A549 (cell line): ENCODE measurements at regions of chr11 and their contacts with region 1.

Region 1: DNA sequence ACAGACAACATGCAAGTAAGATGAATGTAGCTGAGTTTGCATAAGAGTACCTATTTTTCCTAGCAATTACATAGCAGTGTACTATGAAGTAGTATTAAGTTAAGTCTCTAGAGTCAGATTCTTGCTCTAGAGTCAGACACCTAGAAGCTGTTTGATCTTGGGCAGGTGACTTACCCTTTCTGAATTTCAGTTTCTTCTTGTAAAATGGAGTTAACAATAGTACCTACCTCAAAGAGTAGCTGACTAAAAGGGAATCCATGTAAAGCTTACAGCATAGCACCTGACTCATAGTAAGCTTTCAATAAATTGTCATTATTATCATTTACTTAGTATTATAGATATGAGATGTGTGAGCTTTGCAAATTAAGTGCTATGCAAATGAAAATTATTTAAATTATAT is 47.8 kb upstream of the PTPRJ start:
- DNase-seq: no peak
- ATAC-seq: no peak
- H3K4me3 ChIP-seq: no peak overlapping the region
- H3K27ac ChIP-seq: peak overlapping the region; percentile 78 to 92
- H3K4me1 ChIP-seq: peaks cover 32% of the 10 kb centered on the region
- CTCF ChIP-seq: no peak
- EP300 ChIP-seq: no peak
- POLR2A ChIP-seq: no peak
- RAD21 ChIP-seq: no peak

Region 2: GRCh38 chr11:47917643-47918369 is 14.7 kb before region 1 on chr11:
- CTCF ChIA-PET with region 1: interaction called, 10 read pairs
- POLR2A ChIA-PET with region 1: interaction called, 3 read pairs
- DNase-seq: peak; percentile 80 to 94
- ATAC-seq: peak; percentile 80 to 93
- H3K4me3 ChIP-seq: no peak overlapping the region
- H3K27ac ChIP-seq: peak overlapping the region; percentile 73 to 76
- H3K4me1 ChIP-seq: peaks cover 53% of the 10 kb centered on the region
- CTCF ChIP-seq: no peak
- EP300 ChIP-seq: no peak
- POLR2A ChIP-seq: no peak
- RAD21 ChIP-seq: no peak

Region 3: GRCh38 chr11:47967577-47968425 is 35.3 kb after region 1 on chr11:
- CTCF ChIA-PET with region 1: interaction called, 18 read pairs
- POLR2A ChIA-PET with region 1: no interaction called
- DNase-seq: no peak
- ATAC-seq: peak in 1 of 2 experiments; percentile 33; a peak in 1 of 6 replicates
- H3K4me3 ChIP-seq: no peak overlapping the region
- H3K27ac ChIP-seq: peak overlapping the region in 1 of 2 experiments; percentile 19; a peak in 3 of 6 replicates
- H3K4me1 ChIP-seq: peaks cover 10% of the 10 kb centered on the region; the same call in 1 of the 3 replicates
- CTCF ChIP-seq: no peak
- EP300 ChIP-seq: no peak
- POLR2A ChIP-seq: no peak
- RAD21 ChIP-seq: no peak

Region 4: DNA sequence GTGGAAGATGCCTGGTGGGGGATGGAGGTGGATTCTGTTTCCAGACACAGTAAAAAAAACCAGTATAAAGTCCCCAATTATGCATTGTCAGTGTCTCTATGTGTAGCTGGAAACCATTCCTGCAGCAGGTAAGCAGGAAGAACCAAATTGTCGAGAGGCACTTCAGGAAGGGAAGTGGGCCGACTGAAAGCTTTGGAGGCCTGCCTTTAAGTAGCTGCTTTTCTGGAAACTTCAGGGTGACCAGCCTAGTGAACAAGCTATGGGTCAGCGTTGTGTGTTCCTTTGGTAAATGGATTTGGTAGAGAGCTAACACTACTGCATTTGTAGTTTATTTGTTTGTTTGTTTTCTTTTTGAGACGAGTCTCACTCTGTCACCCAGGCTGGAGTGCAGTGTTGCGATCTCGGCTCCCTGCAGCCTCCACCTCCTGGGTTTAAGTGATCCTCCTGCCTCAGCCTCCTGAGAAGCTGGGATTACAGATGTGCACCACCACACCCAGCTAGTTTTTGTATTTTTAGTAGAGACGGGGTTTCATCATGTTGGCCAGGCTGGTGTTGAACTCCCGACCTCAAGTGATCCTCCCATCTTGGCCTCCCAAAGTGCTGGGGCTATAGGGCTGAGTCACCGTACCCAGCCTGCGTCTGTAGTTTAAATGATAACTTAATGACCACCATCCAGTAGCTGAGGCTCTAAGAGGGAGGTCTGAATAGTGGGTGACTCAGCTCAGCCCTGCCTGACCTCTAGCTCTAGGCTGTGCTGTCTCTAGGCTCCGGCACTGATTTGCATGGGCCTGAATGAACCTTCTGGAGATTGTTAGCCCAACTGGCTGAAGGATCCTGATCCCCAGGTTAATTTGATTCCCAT is 60.6 kb after region 1 on chr11:
- CTCF ChIA-PET with region 1: interaction called, 19 read pairs
- POLR2A ChIA-PET with region 1: interaction called, 5 read pairs
- DNase-seq: peak; percentile 72 to 95
- ATAC-seq: peak; percentile 90 to 92
- H3K4me3 ChIP-seq: no peak overlapping the region
- H3K27ac ChIP-seq: peak overlapping the region; percentile 97 to 100
- H3K4me1 ChIP-seq: peaks cover 92% of the 10 kb centered on the region
- CTCF ChIP-seq: no peak
- EP300 ChIP-seq: peak; percentile 80 to 82; a peak in 3 of 5 replicates
- POLR2A ChIP-seq: no peak
- RAD21 ChIP-seq: peak; percentile 28 to 42; a peak in 4 of 5 replicates

Region 5: DNA sequence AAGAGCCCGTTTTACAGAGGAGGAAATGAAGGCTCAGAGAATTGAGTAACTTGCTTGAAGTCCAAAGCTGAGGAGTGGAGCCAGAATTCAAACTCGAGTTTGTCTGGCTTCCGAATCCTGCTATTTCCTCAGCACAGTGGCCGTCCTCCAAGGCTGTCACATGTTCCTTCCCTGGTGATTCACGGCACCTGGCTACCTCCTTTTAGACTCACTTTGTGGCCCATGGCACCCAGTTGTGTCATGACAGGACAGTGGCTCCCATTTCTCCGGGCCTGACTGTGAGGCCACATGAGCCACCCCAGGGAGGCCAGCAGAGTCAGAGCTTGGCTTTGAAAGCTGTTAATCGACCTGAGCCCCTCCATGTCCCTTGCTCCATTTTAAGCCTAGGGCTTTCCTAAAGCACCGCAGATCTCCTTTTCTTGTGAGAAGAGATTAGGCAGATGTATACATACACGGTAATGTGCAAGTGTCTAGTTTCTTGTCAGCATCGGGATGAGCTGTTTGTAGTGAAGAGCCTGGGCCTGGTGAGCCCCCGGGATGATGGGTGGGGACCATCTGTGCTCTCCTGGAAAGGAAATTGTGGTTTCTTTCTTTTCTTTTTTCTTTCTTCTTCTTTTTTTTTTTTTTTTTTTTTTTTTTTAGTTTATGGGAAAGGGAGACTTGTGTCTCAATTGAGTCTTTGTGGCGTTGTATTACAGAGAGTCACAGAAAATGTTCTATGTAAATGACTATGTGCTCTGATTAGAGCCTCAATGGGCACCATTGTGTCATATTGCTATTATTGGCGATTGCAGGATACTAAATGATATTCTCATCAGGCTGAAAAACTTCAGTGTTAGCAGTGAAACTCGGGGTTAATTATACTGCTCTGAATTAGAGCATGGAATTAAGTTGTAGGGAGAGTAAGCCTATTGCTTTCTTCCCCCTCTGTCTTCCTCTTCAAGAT is 102.7 kb after region 1 on chr11:
- CTCF ChIA-PET with region 1: no interaction called
- POLR2A ChIA-PET with region 1: no interaction called
- DNase-seq: no peak
- ATAC-seq: no peak
- H3K4me3 ChIP-seq: no peak overlapping the region
- H3K27ac ChIP-seq: peak overlapping the region in 1 of 2 experiments; percentile 31; a peak in 2 of 6 replicates
- H3K4me1 ChIP-seq: peaks cover 58% of the 10 kb centered on the region
- CTCF ChIP-seq: no peak
- EP300 ChIP-seq: no peak
- POLR2A ChIP-seq: no peak
- RAD21 ChIP-seq: no peak

Region 6: DNA sequence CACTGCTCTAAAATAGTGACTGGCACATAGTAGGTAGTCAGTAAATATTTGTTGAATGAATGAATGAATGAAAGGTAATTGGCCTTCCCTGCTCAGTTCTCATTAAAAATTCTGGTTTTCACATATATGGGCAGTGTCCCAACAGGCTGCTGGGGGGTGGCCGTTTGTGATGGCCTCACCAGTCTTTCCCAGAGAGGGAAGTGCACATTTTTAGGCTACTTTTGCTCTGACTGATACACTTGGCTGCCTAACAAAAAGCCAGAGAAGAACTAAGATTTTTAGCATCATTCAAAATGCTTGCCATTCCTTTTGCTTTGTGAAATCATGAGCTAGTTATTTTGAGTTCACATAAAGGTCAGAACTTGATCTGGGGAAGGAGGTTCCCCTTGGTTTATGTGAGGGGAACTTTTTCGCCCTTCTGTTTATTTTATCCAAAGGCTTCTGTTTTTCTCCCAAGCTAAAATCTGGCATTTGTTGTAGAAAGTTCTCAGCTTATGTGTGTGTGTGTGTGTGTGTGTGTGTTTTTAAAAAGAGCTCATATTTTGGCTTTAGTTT is 131.0 kb after region 1 on chr11:
- CTCF ChIA-PET with region 1: interaction called, 11 read pairs
- POLR2A ChIA-PET with region 1: interaction called, 11 read pairs
- DNase-seq: peak; percentile 57 to 78
- ATAC-seq: peak; percentile 61 to 72
- H3K4me3 ChIP-seq: no peak overlapping the region
- H3K27ac ChIP-seq: peak overlapping the region; percentile 74 to 90
- H3K4me1 ChIP-seq: peaks cover 84% of the 10 kb centered on the region
- CTCF ChIP-seq: no peak
- EP300 ChIP-seq: peak in 1 of 2 experiments; percentile 57; a peak in 2 of 5 replicates
- POLR2A ChIP-seq: no peak
- RAD21 ChIP-seq: peak in 1 of 2 experiments; percentile 15; a peak in 1 of 5 replicates

Region 7: DNA sequence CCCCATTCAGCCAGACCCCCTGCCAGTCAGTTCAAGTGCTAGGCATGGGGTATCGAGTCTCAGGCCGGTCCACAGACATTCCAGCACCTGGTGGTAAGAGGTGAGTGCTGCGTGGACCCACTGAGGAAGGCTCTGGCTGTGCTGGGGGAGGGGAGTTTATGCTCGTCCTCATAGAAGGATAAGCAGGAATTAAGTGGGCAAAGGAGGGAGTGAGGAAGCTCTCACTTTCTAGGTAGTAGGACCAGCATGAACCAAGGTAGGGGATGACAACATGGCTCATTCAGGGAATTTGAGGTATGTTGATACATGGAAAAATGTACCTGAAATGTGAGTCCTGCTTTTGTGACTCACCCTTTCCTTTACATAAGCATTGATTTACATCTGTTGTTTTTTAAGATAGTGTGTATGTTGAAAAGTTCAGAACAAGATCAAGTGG is 164.5 kb after region 1 on chr11:
- CTCF ChIA-PET with region 1: interaction called, 478 read pairs
- POLR2A ChIA-PET with region 1: no interaction called
- DNase-seq: no peak
- ATAC-seq: peak in 1 of 2 experiments; percentile 11; a peak in 2 of 6 replicates
- H3K4me3 ChIP-seq: no peak overlapping the region
- H3K27ac ChIP-seq: peak overlapping the region; percentile 13 to 50; a peak in 2 of 6 replicates
- H3K4me1 ChIP-seq: peaks cover 85% of the 10 kb centered on the region
- CTCF ChIP-seq: no peak
- EP300 ChIP-seq: no peak
- POLR2A ChIP-seq: no peak
- RAD21 ChIP-seq: no peak